IMR-90 (cell line): ENCODE measurements at regions of chr7 and their contacts with region 1.

Region 1: DNA sequence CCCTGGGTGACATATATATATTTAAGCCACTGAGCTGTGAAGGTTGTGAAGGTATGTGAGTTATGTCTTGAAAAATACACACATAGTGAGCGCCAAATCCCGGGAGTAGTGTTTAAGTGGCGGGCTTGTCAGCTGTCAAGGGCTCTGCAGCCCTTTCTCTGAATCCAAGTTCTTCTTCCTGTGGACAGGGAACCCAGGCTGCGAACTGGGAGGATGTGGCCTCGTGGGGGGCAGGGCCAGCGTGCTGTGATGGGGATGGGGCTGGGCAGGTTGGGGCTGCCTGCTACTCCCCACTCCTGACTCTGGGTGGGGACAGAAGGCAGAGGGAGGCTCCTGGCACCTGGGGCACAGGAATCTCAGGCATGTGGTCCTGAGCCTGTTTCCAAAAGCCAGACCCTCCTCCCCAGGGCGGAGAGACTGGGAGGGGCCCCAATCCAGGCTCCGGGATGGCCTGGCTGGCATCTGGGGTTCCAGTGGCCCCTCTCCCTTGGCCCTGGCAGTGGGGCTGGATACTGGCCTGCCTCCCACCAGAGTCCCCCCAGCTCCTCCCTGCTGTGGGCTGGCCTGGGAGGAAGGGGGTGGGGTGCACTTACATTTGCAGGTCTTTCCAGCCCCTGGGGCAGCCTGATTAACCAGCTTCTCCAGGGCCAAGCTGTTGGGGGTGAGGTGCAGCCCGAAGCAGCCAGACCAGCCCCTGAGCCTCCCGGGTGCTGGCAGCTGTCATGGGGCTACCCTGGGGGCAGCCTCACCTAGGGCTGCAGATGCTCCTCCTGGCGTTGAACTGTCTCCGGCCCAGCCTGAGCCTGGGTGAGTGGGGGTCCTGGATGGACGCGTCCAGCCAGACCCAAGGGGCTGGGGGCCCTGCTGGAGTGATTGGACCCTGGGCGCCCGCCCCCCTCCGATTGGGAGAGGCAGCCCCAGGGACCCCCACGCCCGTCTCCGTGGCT is at the start of gene UPK3B:
- DNase-seq: no peak
- ATAC-seq: peak; percentile 52
- H3K4me3 ChIP-seq: no peak within 1 kb of the TSS
- H3K27ac ChIP-seq: no peak within 1 kb of the TSS
- H3K4me1 ChIP-seq: no peaks in the 10 kb centered on the region; the same call in 1 of the 2 replicates
- H3K27me3 ChIP-seq: no peaks in the 10 kb centered on the region
- CTCF ChIP-seq: no peak
- POLR2A ChIP-seq: no peak
- RAD21 ChIP-seq: no peak
- total RNA-seq, gene UPK3B: not detected in 2 replicates

Region 2: DNA sequence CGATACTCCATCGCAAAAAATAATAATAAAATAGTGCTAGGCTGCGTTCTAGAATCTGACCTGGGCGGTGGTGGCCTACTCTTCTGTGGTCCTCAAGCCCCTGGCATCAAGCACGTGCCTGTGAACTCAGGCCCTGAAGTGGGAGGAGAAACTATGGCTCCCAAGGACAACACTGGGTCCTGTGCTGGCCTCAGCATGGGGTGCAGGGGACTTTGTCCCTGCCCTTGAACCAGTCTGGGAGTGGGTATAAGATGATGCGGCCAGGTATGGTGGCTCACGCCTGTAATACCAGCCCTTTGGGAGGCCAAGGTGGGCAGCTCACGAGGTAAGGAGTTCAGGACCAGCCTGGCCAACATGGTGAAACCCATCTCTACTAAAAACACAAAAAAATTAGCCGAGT is 80.0 kb before region 1 on chr7:
- CTCF ChIA-PET with region 1: no interaction called
- POLR2A ChIA-PET with region 1: no interaction called
- dilution Hi-C with region 1: no loop called
- in situ Hi-C with region 1: loop called (anchors 5 kb)
- intact Hi-C with region 1: no loop called
- DNase-seq: no peak
- ATAC-seq: no peak
- H3K4me3 ChIP-seq: no peak overlapping the region
- H3K27ac ChIP-seq: no peak overlapping the region
- H3K4me1 ChIP-seq: no peaks in the 10 kb centered on the region
- H3K27me3 ChIP-seq: 0 out of 2 replicates have a peak, but pooled peaks cover 1% of the 10 kb centered on the region
- CTCF ChIP-seq: no peak
- POLR2A ChIP-seq: no peak
- RAD21 ChIP-seq: no peak